AG04450 (cell line): ENCODE measurements at regions of chr13 and their contacts with region 1.

Region 1: DNA sequence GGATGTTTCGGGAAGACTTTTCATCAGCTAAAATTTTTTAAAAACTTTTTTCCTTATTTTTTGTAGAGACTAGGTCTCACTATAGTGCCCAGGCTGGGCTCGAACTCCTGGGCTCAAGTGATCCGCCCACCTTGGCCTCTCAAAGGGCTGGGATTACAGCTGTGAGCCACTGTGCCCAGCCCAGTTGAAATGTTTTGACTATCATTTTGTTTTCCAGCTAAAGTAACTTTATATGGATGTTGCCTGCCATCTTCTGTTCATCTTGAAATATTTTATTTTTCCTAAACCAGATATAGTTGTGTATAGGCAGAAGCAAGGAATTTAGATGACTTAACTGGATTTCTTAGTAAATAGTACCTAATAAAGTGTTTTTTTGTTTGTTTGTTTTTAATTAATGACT is 7.0 kb downstream of the CAB39L start:
- DNase-seq: no peak
- H3K4me3 ChIP-seq: no peak overlapping the region
- H3K27ac ChIP-seq: no peak overlapping the region
- H3K27me3 ChIP-seq: no peaks in the 10 kb centered on the region
- CTCF ChIP-seq: peak; percentile 30

Region 2: GRCh38 chr13:49240017-49240416 is 196.9 kb before region 1 on chr13:
- CTCF ChIA-PET with region 1: interaction called, 11 read pairs
- POLR2A ChIA-PET with region 1: no interaction called
- DNase-seq: no peak
- H3K4me3 ChIP-seq: no peak overlapping the region
- H3K27ac ChIP-seq: no peak overlapping the region
- H3K27me3 ChIP-seq: no peaks in the 10 kb centered on the region
- CTCF ChIP-seq: peak; percentile 62

Region 3: GRCh38 chr13:49300739-49301589 is 135.9 kb before region 1 on chr13:
- CTCF ChIA-PET with region 1: interaction called, 34 read pairs
- POLR2A ChIA-PET with region 1: no interaction called
- DNase-seq: peak; percentile 48
- H3K4me3 ChIP-seq: no peak overlapping the region
- H3K27ac ChIP-seq: no peak overlapping the region
- H3K27me3 ChIP-seq: no peaks in the 10 kb centered on the region
- CTCF ChIP-seq: peak; percentile 90